Panc1 (cell line): ENCODE measurements at regions of chrX and their contacts with region 1.

Region 1: DNA sequence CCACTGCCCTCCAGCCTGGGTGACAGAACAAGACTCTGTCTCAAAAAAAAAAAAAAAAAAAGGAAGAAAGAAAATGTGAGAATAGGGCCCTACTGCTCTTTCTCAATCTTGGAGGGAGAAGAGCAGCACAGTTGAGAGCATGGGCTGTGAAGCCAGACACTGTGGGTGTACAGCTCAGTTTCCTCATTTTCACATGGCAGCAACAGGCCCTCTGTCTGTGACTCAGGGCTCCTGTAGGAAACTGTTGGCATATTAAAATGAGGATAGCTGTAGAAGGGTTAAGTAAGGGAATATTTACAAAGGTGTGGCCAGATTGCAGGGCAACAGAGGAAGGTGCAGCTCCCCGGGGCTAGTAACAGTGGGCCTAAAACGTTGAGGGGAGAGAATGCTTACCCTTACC is 3.4 kb downstream of the AKAP14 start:
- DNase-seq: no peak
- ATAC-seq: peak; percentile 39; the same call in 1 of the 2 replicates
- H3K4me3 ChIP-seq: no peak overlapping the region
- H3K27ac ChIP-seq: no peak overlapping the region
- H3K4me1 ChIP-seq: no peaks in the 10 kb centered on the region
- H3K27me3 ChIP-seq: no peaks in the 10 kb centered on the region
- CTCF ChIP-seq: no peak

Region 2: DNA sequence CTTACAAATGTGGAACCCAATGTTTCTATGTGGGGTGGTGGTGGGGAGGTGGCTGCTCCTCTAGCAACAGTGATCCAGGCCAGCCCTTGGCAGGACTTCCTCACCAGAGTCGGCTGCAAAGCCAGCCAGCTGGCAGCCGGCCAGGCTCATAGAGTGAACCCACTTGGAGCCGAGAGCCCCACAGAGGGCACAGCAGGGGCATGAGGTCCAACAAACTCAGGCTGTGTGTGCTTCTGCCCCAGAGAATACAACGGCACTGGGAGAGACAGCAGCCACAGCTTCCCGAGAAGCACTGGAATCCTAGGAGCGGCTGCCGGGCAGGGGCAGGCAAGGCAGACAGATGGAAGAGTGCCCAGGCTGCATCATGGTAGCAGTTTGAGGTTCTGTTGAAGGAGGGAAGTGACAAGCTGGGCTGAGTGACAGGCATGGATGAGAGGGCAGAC is 164.2 kb before region 1 on chrX:
- CTCF ChIA-PET with region 1: no interaction called
- POLR2A ChIA-PET with region 1: no interaction called
- in situ Hi-C with region 1: no loop called
- intact Hi-C with region 1: no loop called
- DNase-seq: no peak
- ATAC-seq: peak; percentile 54
- H3K4me3 ChIP-seq: no peak overlapping the region
- H3K27ac ChIP-seq: no peak overlapping the region
- H3K4me1 ChIP-seq: peaks cover 8% of the 10 kb centered on the region; the same call in 1 of the 2 replicates
- H3K27me3 ChIP-seq: no peaks in the 10 kb centered on the region
- CTCF ChIP-seq: no peak

Region 3: GRCh38 chrX:119833905-119834304 is 65.2 kb before region 1 on chrX:
- CTCF ChIA-PET with region 1: interaction called, 14 read pairs
- POLR2A ChIA-PET with region 1: no interaction called
- in situ Hi-C with region 1: no loop called
- intact Hi-C with region 1: no loop called
- DNase-seq: no peak
- ATAC-seq: no peak
- H3K4me3 ChIP-seq: no peak overlapping the region
- H3K27ac ChIP-seq: no peak overlapping the region
- H3K4me1 ChIP-seq: no peaks in the 10 kb centered on the region
- H3K27me3 ChIP-seq: no peaks in the 10 kb centered on the region
- CTCF ChIP-seq: no peak

Region 4: DNA sequence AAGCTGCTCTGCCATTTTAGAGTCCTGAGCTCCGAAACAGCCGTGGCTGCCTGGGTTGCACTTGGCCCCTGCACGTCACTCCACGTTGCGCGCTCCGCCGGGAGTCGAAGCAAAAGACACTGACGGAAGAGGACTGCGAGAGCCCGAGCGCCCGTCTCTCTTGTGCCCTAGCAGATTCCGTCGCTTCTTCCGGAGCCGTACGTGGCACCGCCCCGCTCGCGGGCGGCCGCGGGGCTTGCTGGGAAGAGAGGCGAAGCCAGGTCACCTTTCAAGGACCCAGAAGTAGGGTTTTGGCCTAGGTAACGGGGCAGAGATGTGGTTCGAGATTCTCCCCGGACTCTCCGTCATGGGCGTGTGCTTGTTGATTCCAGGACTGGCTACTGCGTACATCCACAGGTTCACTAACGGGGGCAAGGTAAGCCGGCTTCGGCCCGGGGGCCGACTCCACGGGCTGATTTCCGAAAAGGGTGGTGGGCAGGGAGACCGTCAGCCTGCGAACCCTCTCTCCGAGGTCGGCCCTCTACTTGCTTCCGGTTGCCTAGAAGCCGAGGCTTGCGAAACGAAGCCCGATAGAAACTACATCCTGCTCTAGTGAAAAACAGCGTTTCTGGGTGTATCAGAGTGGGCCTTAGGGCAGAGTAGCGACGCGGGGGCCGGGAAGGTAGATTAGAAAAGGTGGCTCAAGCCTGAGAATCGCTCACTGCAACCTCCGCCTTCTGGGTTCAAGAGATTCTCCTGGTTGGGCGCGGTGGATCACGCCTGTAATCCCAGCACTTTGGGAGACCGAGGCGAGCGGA is 27.3 kb before region 1 on chrX and contains the starts of genes NDUFA1 and RNF113A:
- CTCF ChIA-PET with region 1: no interaction called
- POLR2A ChIA-PET with region 1: interaction called, 13 read pairs
- in situ Hi-C with region 1: no loop called
- intact Hi-C with region 1: no loop called
- DNase-seq: peak; percentile 70
- ATAC-seq: peak; percentile 99
- H3K4me3 ChIP-seq: peak within 1 kb of the TSS; percentile 81 to 88
- H3K27ac ChIP-seq: peak within 1 kb of the TSS; percentile 88
- H3K4me1 ChIP-seq: peaks cover 12% of the 10 kb centered on the region
- H3K27me3 ChIP-seq: no peaks in the 10 kb centered on the region
- CTCF ChIP-seq: no peak
- total RNA-seq, gene NDUFA1: 252 TPM
- total RNA-seq, gene RNF113A: 23.4 TPM

Region 5: GRCh38 chrX:121050781-121051180 is 1151.7 kb after region 1 on chrX:
- CTCF ChIA-PET with region 1: no interaction called
- POLR2A ChIA-PET with region 1: no interaction called
- in situ Hi-C with region 1: no loop called
- intact Hi-C with region 1: no loop called
- DNase-seq: no peak
- ATAC-seq: no peak
- H3K4me3 ChIP-seq: no peak overlapping the region
- H3K27ac ChIP-seq: no peak overlapping the region
- H3K4me1 ChIP-seq: no peaks in the 10 kb centered on the region
- H3K27me3 ChIP-seq: no peaks in the 10 kb centered on the region; the same call in 1 of the 2 replicates
- CTCF ChIP-seq: no peak